Activated CD4-positive, alpha-beta memory T cell treated with anti-CD3 and anti-CD28 coated beads, Interleukin-2, amount 10 ng/mL, durations not matched to agents 7 days and 5 days (primary cell): ENCODE measurements at regions of chr22 and their contacts with region 1.

Region 1: GRCh38 chr22:30649430-30650007 is 13.9 kb downstream of the SLC35E4 start:
- DNase-seq: peak; percentile 88
- H3K4me3 Mint-ChIP-seq: no peak overlapping the region
- H3K27ac Mint-ChIP-seq: peak overlapping the region; percentile 90
- H3K4me1 Mint-ChIP-seq: peaks cover 52% of the 10 kb centered on the region
- H3K27me3 Mint-ChIP-seq: no peaks in the 10 kb centered on the region

Region 2: DNA sequence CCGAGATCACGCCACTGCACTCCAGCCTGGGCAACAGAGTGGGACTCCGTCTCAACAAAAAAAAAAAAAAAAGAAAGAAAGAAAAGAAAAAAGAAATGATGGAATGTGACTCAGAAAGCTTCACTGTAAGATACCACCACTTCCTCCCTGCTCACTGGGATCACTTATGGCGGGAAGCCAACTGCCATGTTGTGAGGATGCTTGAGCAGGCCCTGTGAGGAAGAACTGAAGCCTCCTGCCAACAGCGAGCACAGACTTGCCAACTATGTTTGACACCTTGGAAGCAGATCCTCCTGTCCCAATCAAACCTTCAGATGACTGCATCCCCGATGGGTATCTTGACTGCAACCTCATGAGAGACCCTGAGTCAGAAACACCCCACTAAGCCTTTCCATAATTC is 111.2 kb before region 1 on chr22:
- CTCF ChIA-PET with region 1: no interaction called
- POLR2A ChIA-PET with region 1: no interaction called
- DNase-seq: no peak
- H3K4me3 Mint-ChIP-seq: no peak overlapping the region
- H3K27ac Mint-ChIP-seq: no peak overlapping the region
- H3K4me1 Mint-ChIP-seq: peaks cover 11% of the 10 kb centered on the region
- H3K27me3 Mint-ChIP-seq: peaks cover 32% of the 10 kb centered on the region

Region 3: DNA sequence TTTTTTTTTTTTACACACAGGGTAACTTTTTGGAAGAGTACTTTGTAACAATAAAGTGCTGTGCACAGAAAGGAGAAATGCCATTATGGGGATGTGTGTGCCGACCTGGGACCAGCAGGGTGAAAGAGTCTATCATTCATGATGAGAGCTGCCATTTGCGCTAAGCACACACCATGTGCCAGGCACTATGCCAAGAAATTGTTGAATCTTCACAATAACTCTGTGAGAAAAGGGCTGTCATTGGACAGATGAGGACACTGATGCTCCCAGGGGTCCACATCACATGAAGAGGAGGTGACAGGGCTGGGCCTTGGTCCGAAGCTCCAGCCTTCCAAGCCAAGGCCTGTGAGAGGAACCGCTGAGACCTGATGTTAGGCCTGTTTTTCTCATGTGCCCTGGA is 12.5 kb after region 1 on chr22:
- CTCF ChIA-PET with region 1: interaction called, 4 read pairs
- POLR2A ChIA-PET with region 1: interaction called, 27 read pairs
- DNase-seq: no peak
- H3K4me3 Mint-ChIP-seq: no peak overlapping the region
- H3K27ac Mint-ChIP-seq: no peak overlapping the region
- H3K4me1 Mint-ChIP-seq: peaks cover 17% of the 10 kb centered on the region
- H3K27me3 Mint-ChIP-seq: no peaks in the 10 kb centered on the region

Region 4: DNA sequence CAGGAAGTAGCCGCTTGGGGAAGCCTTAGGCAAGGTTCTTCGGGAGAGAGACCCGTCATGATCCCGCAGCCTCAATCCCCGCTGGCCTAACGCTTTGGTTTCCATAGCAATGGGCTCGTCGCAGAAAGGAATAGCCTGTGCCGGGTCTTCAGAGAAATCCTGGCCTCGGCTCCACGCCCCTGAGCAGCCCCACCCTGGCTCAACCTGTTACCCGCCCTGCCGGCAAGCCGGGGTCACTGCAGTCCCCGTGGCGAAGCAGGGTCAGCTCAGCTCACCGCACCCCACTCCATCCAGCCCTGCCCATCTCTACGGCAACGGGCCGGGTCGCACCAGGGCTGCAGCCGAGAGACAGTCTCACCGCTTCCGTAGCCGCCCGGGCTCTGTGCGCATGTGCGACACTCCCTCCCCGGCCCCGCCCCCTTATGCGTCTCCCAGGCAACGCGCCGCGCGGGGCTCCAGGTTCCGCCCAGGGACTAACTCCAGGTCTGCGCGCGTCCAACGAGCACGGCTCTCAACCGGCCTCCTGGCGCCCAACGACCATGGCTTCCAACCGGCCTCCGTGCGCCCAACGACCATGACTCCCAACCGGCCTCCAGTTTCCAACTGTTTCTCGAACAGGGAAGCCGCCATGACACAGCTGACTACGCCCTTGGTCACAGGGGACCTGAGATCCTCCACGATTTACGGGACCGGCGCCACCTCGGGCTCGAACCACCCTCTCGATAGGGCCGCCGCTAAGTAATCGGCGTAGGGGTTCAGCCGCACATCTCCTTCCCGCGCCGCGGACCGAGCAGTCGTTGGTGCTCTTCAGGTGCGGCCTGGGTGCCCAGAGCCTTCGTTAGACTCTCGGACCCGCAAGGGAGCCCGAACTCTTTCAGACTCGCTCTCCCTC is 18.2 kb after region 1 on chr22 and contains the start of gene DUSP18:
- CTCF ChIA-PET with region 1: interaction called, 4 read pairs
- POLR2A ChIA-PET with region 1: interaction called, 27 read pairs
- DNase-seq: peak; percentile 96
- H3K4me3 Mint-ChIP-seq: peak within 1 kb of the TSS; percentile 95
- H3K27ac Mint-ChIP-seq: peak within 1 kb of the TSS; percentile 81
- H3K4me1 Mint-ChIP-seq: peaks cover 24% of the 10 kb centered on the region
- H3K27me3 Mint-ChIP-seq: peaks cover 3% of the 10 kb centered on the region
- total RNA-seq, gene DUSP18: 14.3 to 18.5 TPM